Activated CD4-positive, alpha-beta T cell treated with anti-CD3 and anti-CD28 coated beads, Interleukin-2, amount 10 ng/mL, durations not matched to agents 7 days and 5 days (primary cell): ENCODE measurements at regions of chr9 and their contacts with region 1.

Region 1: DNA sequence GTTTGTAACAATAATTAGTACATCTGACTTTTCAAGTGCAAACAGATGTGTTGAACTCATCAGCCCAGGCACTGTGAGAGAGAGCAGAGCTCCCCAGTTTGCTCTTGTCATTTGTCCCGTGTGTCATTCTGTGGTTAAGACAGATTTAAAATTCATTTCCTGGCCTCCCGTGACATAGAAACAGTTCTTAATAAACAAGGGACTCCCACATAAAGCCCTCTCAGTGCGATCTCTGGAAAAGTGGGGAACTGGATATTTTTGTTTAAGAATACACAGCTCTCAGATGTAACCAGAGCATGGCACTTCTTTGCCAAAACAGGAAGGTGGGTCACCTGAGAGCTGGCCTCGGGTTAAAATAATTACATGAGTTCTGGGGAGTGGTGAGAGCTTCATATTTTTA is 58.6 kb downstream of the PRKACG start:
- DNase-seq: no peak
- H3K4me3 Mint-ChIP-seq: no peak overlapping the region
- H3K27ac Mint-ChIP-seq: no peak overlapping the region
- H3K4me1 Mint-ChIP-seq: peaks cover 26% of the 10 kb centered on the region
- H3K27me3 Mint-ChIP-seq: peaks cover 3% of the 10 kb centered on the region

Region 2: GRCh38 chr9:68974431-68974830 is 19.1 kb after region 1 on chr9:
- CTCF ChIA-PET with region 1: interaction called, 13 read pairs
- POLR2A ChIA-PET with region 1: no interaction called
- DNase-seq: peak; percentile 17
- H3K4me3 Mint-ChIP-seq: no peak overlapping the region
- H3K27ac Mint-ChIP-seq: peak overlapping the region; percentile 48
- H3K4me1 Mint-ChIP-seq: peaks cover 44% of the 10 kb centered on the region
- H3K27me3 Mint-ChIP-seq: no peaks in the 10 kb centered on the region